Activated CD8-positive, alpha-beta T cell treated with anti-CD3 and anti-CD28 coated beads, Interleukin-2, amount 10 ng/mL, durations not matched to agents 7 days and 5 days (primary cell): ENCODE measurements at regions of chr2 and their contacts with region 1.

Region 1: GRCh38 chr2:126776692-126777619 is 121.0 kb downstream of the GYPC start:
- DNase-seq: peak; percentile 88
- ATAC-seq: peak; percentile 93
- H3K4me3 Mint-ChIP-seq: peak overlapping the region; percentile 87
- H3K27ac Mint-ChIP-seq: peak overlapping the region; percentile 85
- H3K4me1 Mint-ChIP-seq: peaks cover 12% of the 10 kb centered on the region
- H3K27me3 Mint-ChIP-seq: peaks cover 15% of the 10 kb centered on the region

Region 2: DNA sequence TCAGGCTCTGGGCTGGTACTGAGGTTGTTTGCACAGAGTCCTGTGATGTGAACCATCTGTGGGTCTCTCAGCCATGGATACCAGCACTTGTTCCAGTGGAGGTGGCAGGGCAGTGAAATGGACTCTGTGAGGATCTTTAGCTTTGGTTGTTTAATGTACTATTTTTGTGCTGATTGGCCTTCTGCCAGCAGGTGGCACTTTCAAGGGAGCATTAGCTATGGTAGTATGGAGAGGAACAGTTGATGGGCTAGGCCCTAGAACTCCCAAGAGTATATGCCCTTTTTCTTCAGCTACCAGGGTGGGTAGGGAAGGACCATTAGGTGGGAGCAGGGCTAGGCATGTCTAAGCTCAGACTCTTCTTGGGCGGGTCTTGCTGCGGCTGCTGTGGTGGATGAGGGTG is 378.0 kb before region 1 on chr2:
- CTCF ChIA-PET with region 1: interaction called, 21 read pairs
- POLR2A ChIA-PET with region 1: no interaction called
- DNase-seq: peak; percentile 43
- ATAC-seq: no peak
- H3K4me3 Mint-ChIP-seq: no peak overlapping the region
- H3K27ac Mint-ChIP-seq: no peak overlapping the region
- H3K4me1 Mint-ChIP-seq: no peaks in the 10 kb centered on the region
- H3K27me3 Mint-ChIP-seq: peaks cover 13% of the 10 kb centered on the region

Region 3: DNA sequence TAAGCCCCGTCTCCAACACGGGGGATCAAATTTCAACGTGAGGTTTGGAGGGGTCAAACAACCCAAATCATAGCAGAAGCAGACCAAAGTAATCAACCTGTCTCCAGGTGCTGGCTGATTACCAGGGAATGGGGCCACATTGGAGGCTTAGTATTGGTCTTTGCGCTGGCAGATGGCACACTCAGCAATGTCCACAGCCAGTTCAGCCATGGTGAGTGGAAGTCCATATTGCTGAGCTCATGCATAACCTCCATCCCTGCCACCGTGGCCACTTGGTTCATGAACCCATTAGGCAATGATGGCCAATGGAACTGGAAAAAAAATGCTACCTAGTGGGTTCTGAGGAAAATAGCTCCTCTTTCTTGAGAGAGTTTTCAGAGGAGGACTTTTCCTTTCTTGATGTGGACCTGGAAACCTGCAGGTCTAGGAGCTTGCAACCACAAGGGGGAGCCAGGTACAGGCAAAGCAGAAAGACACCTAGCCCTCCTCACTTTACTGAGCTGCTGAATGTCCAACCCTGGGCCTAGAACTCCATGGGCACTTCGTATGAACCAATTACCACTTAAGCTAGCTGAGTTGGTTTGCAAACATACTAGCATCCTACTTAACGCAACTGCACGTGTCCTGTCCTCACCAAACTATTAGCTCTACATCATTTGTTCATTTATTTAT is 249.0 kb before region 1 on chr2:
- CTCF ChIA-PET with region 1: interaction called, 131 read pairs
- POLR2A ChIA-PET with region 1: interaction called, 4 read pairs
- DNase-seq: peak; percentile 81
- ATAC-seq: peak; percentile 78
- H3K4me3 Mint-ChIP-seq: no peak overlapping the region
- H3K27ac Mint-ChIP-seq: no peak overlapping the region
- H3K4me1 Mint-ChIP-seq: no peaks in the 10 kb centered on the region
- H3K27me3 Mint-ChIP-seq: peaks cover 4% of the 10 kb centered on the region

Region 4: GRCh38 chr2:126664234-126664633 is 112.7 kb before region 1 on chr2:
- CTCF ChIA-PET with region 1: interaction called, 16 read pairs
- POLR2A ChIA-PET with region 1: interaction called, 4 read pairs
- DNase-seq: peak; percentile 71
- ATAC-seq: peak; percentile 75
- H3K4me3 Mint-ChIP-seq: peak overlapping the region; percentile 48
- H3K27ac Mint-ChIP-seq: peak overlapping the region; percentile 95
- H3K4me1 Mint-ChIP-seq: peaks cover 83% of the 10 kb centered on the region
- H3K27me3 Mint-ChIP-seq: no peaks in the 10 kb centered on the region

Region 5: GRCh38 chr2:126761981-126762878 is 14.7 kb before region 1 on chr2:
- CTCF ChIA-PET with region 1: interaction called, 19 read pairs
- POLR2A ChIA-PET with region 1: no interaction called
- DNase-seq: peak; percentile 88
- ATAC-seq: peak; percentile 95
- H3K4me3 Mint-ChIP-seq: peak overlapping the region; percentile 64
- H3K27ac Mint-ChIP-seq: peak overlapping the region; percentile 88
- H3K4me1 Mint-ChIP-seq: peaks cover 52% of the 10 kb centered on the region
- H3K27me3 Mint-ChIP-seq: peaks cover 11% of the 10 kb centered on the region